Right cardiac atrium (tissue), 5 donors: ENCODE measurements at regions of chr5 and their contacts with region 1.

Region 1: DNA sequence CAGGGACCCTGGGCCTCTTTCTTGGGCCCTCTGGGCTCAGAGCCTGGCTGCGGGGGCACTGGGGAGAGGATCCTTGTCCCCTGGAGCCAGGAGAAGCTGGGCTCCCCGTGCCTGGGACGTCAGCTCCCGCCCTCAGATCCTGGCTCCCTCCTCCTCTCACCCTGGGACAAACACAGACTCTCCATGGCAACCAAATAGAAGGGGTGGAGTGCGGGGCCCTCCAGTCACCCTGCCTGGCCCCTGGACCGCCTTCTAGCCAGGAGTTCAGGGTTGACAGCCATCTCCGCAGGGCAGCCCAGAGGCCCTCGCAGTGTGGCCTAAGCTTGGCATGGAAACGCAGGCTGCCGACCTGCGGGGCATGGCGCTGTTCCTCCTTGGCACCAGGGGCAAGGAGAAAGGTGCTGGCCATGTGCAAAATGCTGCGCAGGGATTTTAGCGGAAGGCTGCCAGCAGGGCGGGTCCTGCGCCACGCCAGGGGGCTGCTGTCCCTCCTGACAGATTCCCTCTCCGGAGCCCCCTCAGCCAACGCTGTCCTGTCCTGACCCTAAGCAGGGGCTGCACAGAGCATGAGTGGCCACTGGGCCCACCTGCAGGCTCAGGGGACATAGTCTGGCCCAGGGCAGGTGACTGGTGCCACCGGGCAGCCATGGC is 1.0 kb downstream of the ZDHHC11 start:
- DNase-seq: peak; percentile 73 to 84 (median 83)
- ATAC-seq: peak; percentile 78 to 89
- H3K4me3 ChIP-seq: no peak overlapping the region
- H3K27ac ChIP-seq: no peak overlapping the region
- H3K4me1 ChIP-seq: no peaks in the 10 kb centered on the region
- H3K27me3 ChIP-seq: no peaks in the 10 kb centered on the region

Region 2: GRCh38 chr5:746258-746761 is 103.5 kb before region 1 on chr5:
- intact Hi-C with region 1: loop called in 2 of 4 experiments (anchors 5 to 10 kb)
- DNase-seq: peak in 1 of 3 donors; percentile 59
- ATAC-seq: peak; percentile 29 to 49
- H3K4me3 ChIP-seq: no peak overlapping the region
- H3K27ac ChIP-seq: no peak overlapping the region
- H3K4me1 ChIP-seq: no peaks in the 10 kb centered on the region
- H3K27me3 ChIP-seq: no peaks in the 10 kb centered on the region

Region 3: GRCh38 chr5:759111-759751 is 90.5 kb before region 1 on chr5:
- intact Hi-C with region 1: loop called in 1 of 4 experiments (anchors 10 kb)
- DNase-seq: peak; percentile 93 to 97 (median 94)
- ATAC-seq: peak; percentile 75 to 80
- H3K4me3 ChIP-seq: no peak overlapping the region
- H3K27ac ChIP-seq: peak overlapping the region; percentile 39
- H3K4me1 ChIP-seq: no peaks in the 10 kb centered on the region
- H3K27me3 ChIP-seq: no peaks in the 10 kb centered on the region

Region 4: DNA sequence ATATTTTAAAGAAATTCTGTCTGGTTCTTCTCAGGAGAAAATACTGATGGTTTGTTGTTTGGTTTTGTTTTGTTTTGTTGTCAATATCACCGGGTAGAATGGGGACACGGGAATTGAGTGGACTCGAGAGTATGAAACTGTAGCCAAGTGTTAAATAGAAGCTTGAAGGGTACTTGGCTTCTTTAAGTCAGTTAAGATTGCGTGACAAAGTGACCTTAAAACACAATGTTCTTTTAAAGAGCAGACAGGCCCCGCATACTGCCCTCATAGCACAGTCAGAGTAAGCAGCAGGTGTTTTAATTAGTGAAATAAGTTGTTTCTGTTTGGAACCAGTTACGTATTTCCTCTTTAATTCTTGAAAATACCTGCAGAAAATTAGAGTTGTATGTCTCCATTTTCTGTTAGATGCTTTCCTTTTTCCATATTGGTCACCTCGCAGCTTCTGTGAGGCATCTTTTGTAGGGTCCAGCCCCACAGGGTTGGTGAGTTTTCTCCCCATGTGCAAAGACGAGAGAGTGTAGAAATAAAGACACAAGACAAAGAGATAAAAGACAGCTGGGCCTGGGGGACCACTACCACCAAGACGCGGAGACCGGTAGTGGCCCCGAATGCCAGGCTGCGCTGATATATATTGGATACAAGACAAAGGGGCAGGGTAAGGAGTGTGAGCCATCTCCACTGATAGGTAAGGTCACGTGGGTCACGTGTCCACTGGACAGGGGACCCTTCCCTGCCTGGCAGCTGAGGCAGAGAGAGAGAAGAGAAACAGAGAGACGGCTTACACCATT is 52.5 kb after region 1 on chr5:
- intact Hi-C with region 1: no loop called
- DNase-seq: peak in 1 of 3 donors; percentile 28
- ATAC-seq: no peak
- H3K4me3 ChIP-seq: no peak overlapping the region
- H3K27ac ChIP-seq: no peak overlapping the region
- H3K4me1 ChIP-seq: no peaks in the 10 kb centered on the region
- H3K27me3 ChIP-seq: no peaks in the 10 kb centered on the region